H1 (cell line): ENCODE measurements at regions of chr11 and their contacts with region 1.

Region 1: GRCh38 chr11:117817368-117818040 is 7.0 kb downstream of the FXYD2 start:
- DNase-seq: peak; percentile 70 to 97
- H3K4me3 ChIP-seq: peak overlapping the region in 3 of 4 experiments; percentile 10 to 46 (median 29); a peak in 4 of 8 replicates
- H3K27ac ChIP-seq: no peak overlapping the region
- H3K4me1 ChIP-seq: peaks cover 0 to 31% (median 20%) of the 10 kb centered on the region in 4 experiments; a peak in 6 of 7 replicates
- H3K27me3 ChIP-seq: no peaks in the 10 kb centered on the region; a peak in 1 of 7 replicates
- CTCF ChIP-seq: peak in 2 of 3 experiments; percentile 87 to 96; a peak in 3 of 4 replicates
- EP300 ChIP-seq: no peak
- POLR2A ChIP-seq: no peak
- RAD21 ChIP-seq: peak; percentile 85 to 88

Region 2: GRCh38 chr11:117678658-117679406 is 138.7 kb before region 1 on chr11:
- CTCF ChIA-PET with region 1: no interaction called
- POLR2A ChIA-PET with region 1: no interaction called
- DNase-seq: no peak
- H3K4me3 ChIP-seq: no peak overlapping the region
- H3K27ac ChIP-seq: no peak overlapping the region
- H3K4me1 ChIP-seq: peaks cover 6 to 30% (median 21%) of the 10 kb centered on the region in 4 experiments
- H3K27me3 ChIP-seq: no peaks in the 10 kb centered on the region; a peak in 3 of 7 replicates
- CTCF ChIP-seq: no peak
- EP300 ChIP-seq: no peak
- POLR2A ChIP-seq: no peak
- RAD21 ChIP-seq: no peak

Region 3: GRCh38 chr11:117796872-117797529 is 20.5 kb before region 1 on chr11 and contains the start of gene DSCAML1:
- CTCF ChIA-PET with region 1: interaction called, 11 read pairs
- POLR2A ChIA-PET with region 1: no interaction called
- DNase-seq: peak in 1 of 2 experiments; percentile 77
- H3K4me3 ChIP-seq: peak within 1 kb of the TSS; percentile 23 to 72 (median 54)
- H3K27ac ChIP-seq: no peak within 1 kb of the TSS
- H3K4me1 ChIP-seq: peaks cover 0 to 13% (median 6%) of the 10 kb centered on the region in 4 experiments; a peak in 5 of 7 replicates
- H3K27me3 ChIP-seq: peaks cover 27 to 66% (median 58%) of the 10 kb centered on the region in 4 experiments
- CTCF ChIP-seq: no peak
- EP300 ChIP-seq: no peak
- POLR2A ChIP-seq: no peak
- RAD21 ChIP-seq: no peak
- total RNA-seq, gene DSCAML1: 0.19 and 0.27 TPM in 2 replicates

Region 4: DNA sequence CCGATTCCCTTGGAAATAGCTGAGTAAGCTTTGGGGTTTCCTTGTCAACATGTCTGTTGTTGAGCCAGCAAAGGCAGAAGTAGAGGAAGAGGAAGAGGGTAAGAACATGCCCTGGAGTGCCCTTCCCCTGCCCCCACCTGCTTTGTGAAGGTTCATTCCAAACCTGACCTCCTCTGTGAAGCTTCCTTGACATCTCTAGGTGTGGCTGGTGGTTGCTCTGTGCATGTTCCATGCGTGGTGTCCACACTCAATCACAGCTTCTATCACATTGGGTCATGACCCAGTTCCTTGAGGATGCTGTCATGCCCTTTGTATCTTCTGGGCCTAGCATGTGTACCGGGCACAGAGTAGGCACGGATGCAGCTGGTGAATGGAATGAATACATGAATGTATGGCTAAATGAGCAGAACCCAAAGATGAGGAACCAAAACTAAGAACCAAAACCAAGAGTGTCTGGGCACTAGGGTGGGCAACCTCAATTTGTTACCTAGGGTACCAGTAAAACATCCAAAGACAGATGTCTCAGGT is 82.7 kb after region 1 on chr11:
- CTCF ChIA-PET with region 1: interaction called, 36 read pairs
- POLR2A ChIA-PET with region 1: no interaction called
- DNase-seq: no peak
- H3K4me3 ChIP-seq: no peak overlapping the region
- H3K27ac ChIP-seq: no peak overlapping the region
- H3K4me1 ChIP-seq: no peaks in the 10 kb centered on the region; a peak in 1 of 7 replicates
- H3K27me3 ChIP-seq: peaks cover 0 to 2% (median 0%) of the 10 kb centered on the region in 4 experiments; a peak in 1 of 7 replicates
- CTCF ChIP-seq: no peak
- EP300 ChIP-seq: no peak
- POLR2A ChIP-seq: no peak
- RAD21 ChIP-seq: no peak

Region 5: DNA sequence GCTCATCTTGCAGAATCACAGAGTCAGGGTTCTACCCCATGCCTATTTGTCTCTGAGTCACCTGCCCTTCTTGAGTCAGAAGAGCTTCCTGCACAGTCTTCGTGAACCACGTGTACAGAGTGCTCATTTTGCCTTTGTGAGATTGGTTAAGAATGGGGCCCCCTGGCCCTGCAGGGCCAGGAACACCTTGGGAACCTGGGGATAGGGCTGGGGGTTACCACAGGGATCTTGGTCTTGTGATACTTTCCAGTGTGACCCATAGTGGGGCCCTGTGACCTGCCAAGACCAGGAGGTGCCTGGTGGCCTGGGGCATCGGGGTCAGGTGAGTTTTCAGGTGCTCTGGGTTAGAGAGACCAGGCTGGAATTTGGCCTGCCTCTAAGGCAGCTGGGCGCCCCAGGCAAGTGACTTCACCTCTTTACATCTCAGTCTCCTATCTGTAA is 102.3 kb after region 1 on chr11:
- CTCF ChIA-PET with region 1: interaction called, 11 read pairs
- POLR2A ChIA-PET with region 1: no interaction called
- DNase-seq: no peak
- H3K4me3 ChIP-seq: no peak overlapping the region
- H3K27ac ChIP-seq: no peak overlapping the region
- H3K4me1 ChIP-seq: no peaks in the 10 kb centered on the region; a peak in 1 of 7 replicates
- H3K27me3 ChIP-seq: no peaks in the 10 kb centered on the region
- CTCF ChIP-seq: no peak
- EP300 ChIP-seq: no peak
- POLR2A ChIP-seq: no peak
- RAD21 ChIP-seq: no peak

Region 6: GRCh38 chr11:118051611-118052461 is 234.3 kb after region 1 on chr11:
- CTCF ChIA-PET with region 1: interaction called, 69 read pairs
- POLR2A ChIA-PET with region 1: no interaction called
- DNase-seq: no peak
- H3K4me3 ChIP-seq: no peak overlapping the region
- H3K27ac ChIP-seq: no peak overlapping the region
- H3K4me1 ChIP-seq: no peaks in the 10 kb centered on the region; a peak in 1 of 7 replicates
- H3K27me3 ChIP-seq: no peaks in the 10 kb centered on the region
- CTCF ChIP-seq: no peak
- EP300 ChIP-seq: no peak
- POLR2A ChIP-seq: no peak
- RAD21 ChIP-seq: no peak